Activated naive CD4-positive, alpha-beta T cell treated with anti-CD3 and anti-CD28 coated beads, Interleukin-2, amount 10 ng/mL, durations not matched to agents 7 days and 5 days (primary cell): ENCODE measurements at regions of chr6 and their contacts with region 1.

Region 1: DNA sequence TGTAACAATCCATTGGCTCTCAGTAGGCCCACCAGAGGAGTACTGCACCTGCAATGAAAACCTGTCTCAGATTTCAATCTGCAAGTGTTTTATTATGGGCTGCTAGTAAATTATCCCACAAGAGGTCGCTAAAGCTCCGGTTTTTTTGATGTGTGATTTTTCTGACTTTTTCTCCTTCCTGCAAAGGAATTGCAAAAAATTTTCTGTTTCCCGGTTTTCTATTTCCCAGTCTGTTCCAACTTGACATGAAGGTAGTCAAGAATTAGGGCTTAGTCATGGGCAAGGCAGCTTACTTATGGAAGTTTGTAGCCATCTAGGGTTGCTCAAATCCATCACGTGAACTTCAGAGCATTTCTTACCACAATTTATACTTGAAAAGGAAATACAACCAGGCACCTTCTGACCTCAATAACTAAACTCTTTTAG is 38.5 kb upstream of the AHI1 start:
- DNase-seq: no peak
- H3K4me3 Mint-ChIP-seq: peak overlapping the region; percentile 13
- H3K27ac Mint-ChIP-seq: no peak overlapping the region
- H3K4me1 Mint-ChIP-seq: peaks cover 29% of the 10 kb centered on the region
- H3K27me3 Mint-ChIP-seq: peaks cover 6% of the 10 kb centered on the region

Region 2: DNA sequence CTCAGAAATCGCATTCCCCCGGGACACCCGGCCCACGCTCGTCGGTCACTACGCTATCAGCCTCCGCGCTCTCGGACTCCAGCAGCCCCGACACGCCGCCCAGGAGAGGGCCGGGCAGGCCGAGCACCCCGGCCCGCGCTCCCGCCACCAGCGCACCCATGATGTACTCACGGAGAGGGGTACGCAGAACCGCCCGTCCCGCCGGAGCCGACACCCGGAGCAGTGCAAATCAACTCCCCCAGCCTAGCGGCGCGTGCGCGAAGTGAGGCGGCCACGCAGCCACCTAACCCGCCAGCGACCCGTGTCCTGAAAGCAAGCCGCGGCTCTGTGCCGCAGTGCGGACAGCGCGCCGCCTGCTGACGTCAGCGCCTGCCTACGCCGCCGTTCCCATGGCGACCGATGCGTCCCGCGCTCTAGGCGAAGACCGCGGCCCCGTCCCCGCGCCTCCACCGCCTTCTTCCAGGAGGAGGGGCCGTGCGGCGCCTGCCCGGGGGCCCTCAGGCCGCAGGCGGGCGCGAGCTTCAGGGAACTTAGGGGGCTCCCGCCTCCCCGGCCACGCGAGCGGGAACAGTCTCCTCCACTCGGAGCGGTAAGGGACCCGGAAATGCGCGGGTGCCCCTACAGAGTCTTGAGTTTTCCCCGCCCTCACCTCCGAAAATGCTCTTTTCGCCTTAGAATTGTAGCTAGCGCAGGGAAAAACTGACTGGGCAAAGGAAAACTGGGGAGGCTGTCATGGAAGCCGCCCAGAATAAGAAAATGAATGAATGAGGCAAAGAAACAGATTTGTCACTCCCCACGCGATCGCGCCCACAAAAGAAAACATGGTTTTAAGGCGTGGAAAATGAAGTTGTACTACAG is 38.4 kb before region 1 on chr6 and contains the start of gene AHI1:
- CTCF ChIA-PET with region 1: interaction called, 13 read pairs
- DNase-seq: peak; percentile 90
- H3K4me3 Mint-ChIP-seq: no peak within 1 kb of the TSS
- H3K27ac Mint-ChIP-seq: no peak within 1 kb of the TSS
- H3K4me1 Mint-ChIP-seq: peaks cover 16% of the 10 kb centered on the region
- H3K27me3 Mint-ChIP-seq: no peaks in the 10 kb centered on the region

Region 3: GRCh38 chr6:135675862-135676261 is 139.9 kb after region 1 on chr6:
- CTCF ChIA-PET with region 1: interaction called, 14 read pairs
- DNase-seq: peak; percentile 49
- H3K4me3 Mint-ChIP-seq: no peak overlapping the region
- H3K27ac Mint-ChIP-seq: no peak overlapping the region
- H3K4me1 Mint-ChIP-seq: peaks cover 24% of the 10 kb centered on the region
- H3K27me3 Mint-ChIP-seq: no peaks in the 10 kb centered on the region

Region 4: DNA sequence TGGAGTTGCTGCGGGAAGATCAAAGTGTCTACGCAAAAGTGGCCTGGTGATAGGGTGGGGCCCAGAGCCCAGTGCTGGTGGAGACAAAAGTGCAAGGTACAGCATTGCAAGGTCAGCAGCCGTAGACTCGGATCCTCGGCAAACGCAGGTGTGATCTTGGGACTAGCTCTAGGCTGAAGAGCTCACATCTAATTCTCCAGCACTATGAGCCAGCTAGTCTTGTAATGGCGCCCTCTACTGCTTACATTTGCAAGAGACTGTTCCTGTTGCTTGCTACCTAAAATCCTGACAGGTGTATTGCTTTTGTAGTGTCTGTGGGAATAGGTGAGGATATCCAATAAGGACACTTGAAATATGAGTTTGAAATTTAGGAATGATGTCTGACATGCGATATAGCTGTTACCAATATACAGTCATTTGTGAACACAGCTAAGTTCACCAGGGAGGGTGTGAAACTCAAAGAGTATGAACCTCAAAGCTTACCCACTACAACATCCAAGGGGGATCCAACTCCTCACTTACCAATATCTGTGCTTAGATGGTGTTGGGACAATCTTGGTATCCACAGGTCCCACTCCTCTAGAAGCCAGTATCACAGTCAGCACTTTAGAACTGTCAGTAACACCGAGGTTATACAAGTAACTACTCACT is 373.9 kb after region 1 on chr6:
- CTCF ChIA-PET with region 1: interaction called, 23 read pairs
- DNase-seq: peak; percentile 73
- H3K4me3 Mint-ChIP-seq: no peak overlapping the region
- H3K27ac Mint-ChIP-seq: no peak overlapping the region
- H3K4me1 Mint-ChIP-seq: peaks cover 2% of the 10 kb centered on the region
- H3K27me3 Mint-ChIP-seq: no peaks in the 10 kb centered on the region

Region 5: DNA sequence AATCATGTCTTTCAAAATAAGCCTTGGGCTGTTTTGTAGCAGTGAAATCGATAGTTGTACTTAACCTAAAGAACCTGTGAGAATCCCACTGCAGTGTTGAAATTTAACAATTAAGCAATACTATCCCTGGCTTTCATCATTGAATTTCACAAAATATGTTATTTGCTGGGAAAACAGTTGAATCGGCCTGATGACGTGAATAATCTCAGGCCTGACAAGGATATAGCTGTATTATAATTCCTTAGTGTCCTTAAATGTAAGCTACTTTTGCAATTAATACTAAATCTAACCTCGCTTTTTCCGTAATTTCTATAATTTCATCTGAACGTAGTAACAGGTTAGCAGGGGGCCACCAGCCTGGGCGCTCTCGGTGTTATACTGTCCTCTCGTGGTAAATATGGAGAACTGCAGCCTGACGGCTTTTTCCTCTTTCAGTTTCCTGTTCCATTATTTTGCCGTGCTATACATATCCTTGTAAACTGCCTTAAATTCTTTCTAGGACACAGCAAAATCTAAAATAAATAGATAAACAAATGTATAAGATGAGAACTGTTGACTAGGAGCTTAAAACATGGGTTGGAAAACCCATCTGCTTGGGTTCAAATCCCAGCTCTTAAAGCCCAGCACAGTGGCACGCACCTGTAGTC is 690.1 kb after region 1 on chr6:
- CTCF ChIA-PET with region 1: interaction called, 40 read pairs
- DNase-seq: peak; percentile 64
- H3K4me3 Mint-ChIP-seq: no peak overlapping the region
- H3K27ac Mint-ChIP-seq: no peak overlapping the region
- H3K4me1 Mint-ChIP-seq: no peaks in the 10 kb centered on the region
- H3K27me3 Mint-ChIP-seq: no peaks in the 10 kb centered on the region